ENCODE measurements at regions of chr11 and their contacts with region 1.

Region 1: DNA sequence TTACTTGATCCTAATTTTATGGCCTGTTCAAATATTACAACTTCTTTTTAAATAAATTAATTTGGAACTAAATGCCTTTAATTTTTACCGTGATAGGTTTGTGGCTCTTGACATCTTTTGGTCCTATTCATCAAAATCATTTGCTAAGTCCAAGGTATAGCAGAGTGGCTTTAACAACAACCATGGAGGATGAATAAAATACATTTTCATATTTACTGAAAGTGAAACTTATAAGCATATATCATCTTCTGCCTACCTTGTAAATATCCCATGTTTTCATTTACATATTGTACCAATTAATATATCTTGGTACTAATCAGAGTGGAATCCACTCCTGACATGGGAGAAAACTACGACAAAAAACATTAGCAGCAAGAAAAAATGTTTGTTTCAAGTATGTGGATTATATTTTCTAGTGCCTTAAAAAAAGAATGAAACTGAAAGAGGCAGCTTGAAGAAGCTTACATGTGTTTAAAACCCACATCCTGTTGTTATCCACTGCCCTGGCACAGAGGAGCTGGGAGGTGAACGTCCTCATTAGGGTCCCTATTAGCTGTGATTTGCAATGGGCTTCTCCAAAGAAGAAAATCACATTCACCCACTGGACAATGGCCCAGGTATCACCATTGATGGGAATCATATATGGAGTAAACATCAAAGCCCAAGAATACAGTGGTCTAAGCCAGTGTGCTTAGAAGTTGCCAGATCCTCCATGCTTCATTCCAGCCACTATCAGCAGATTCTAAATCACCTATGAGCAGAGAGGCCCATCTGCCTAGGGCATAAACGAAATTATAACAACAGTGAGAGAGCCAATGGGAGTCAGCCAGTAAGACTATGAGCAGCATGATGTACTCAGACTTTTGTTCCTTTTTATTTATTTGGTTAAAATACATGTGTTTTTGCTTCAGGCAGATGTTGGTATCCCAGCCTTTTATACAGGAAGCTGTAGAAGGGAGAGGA is 84.7 kb downstream of the MAML2 start:
- DNase-seq: no peak
- H3K4me3 ChIP-seq: no peak overlapping the region
- CTCF ChIP-seq: no peak

Region 2: DNA sequence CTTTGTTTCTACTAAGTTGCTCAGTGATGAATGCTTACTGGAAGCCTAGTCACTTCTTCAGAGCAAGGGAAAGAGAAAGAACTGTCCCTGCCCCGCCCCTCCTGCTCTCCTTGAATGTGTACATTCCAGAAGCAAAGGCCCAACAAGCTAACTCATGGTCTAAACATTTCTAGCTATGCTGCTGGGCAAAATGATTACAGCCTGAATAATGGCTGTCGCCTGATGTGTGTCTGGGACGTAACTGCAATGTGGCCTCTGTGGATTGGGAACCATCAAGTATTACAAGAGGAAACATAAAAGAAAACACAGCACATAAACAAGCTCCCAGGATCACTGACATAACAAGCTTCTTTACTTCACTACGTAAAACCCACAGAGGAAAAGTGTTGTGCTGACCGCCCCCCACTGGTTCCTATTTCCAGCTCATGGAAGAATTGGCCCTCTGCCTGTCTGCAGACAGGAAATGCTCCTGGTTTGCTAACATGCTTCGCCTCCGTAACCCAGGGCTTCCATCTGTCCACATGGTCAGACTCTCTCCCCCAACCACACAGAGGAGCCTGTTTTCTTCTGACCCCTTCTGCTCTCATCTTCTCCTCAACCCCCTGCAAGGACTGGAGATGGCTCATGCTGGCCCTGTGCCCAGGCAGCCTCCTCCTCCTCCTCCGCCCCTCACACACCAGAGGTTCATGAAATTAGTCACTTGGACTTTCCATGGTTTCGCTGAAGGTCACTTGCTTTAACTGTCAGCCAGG is 102.5 kb before region 1 on chr11:
- in situ Hi-C with region 1: no loop called
- DNase-seq: peak; percentile 97
- H3K4me3 ChIP-seq: peak overlapping the region; percentile 2
- CTCF ChIP-seq: peak; percentile 37

Region 3: GRCh38 chr11:96306933-96307775 is 48.9 kb after region 1 on chr11:
- in situ Hi-C with region 1: loop called (anchors 5 kb)
- DNase-seq: peak; percentile 98
- H3K4me3 ChIP-seq: peak overlapping the region; percentile 23
- CTCF ChIP-seq: no peak

Measured in astrocyte of the cerebellum (primary cell).